H1 (cell line): ENCODE measurements at regions of chr9 and their contacts with region 1.

Region 1: GRCh38 chr9:84397151-84397728 is 56.7 kb upstream of the SLC28A3 start:
- DNase-seq: peak; percentile 31 to 81
- H3K4me3 ChIP-seq: no peak overlapping the region
- H3K27ac ChIP-seq: no peak overlapping the region
- H3K4me1 ChIP-seq: no peaks in the 10 kb centered on the region
- H3K27me3 ChIP-seq: no peaks in the 10 kb centered on the region
- CTCF ChIP-seq: peak; percentile 74 to 84 (median 77)
- EP300 ChIP-seq: no peak
- POLR2A ChIP-seq: no peak
- RAD21 ChIP-seq: peak; percentile 92 to 95

Region 2: DNA sequence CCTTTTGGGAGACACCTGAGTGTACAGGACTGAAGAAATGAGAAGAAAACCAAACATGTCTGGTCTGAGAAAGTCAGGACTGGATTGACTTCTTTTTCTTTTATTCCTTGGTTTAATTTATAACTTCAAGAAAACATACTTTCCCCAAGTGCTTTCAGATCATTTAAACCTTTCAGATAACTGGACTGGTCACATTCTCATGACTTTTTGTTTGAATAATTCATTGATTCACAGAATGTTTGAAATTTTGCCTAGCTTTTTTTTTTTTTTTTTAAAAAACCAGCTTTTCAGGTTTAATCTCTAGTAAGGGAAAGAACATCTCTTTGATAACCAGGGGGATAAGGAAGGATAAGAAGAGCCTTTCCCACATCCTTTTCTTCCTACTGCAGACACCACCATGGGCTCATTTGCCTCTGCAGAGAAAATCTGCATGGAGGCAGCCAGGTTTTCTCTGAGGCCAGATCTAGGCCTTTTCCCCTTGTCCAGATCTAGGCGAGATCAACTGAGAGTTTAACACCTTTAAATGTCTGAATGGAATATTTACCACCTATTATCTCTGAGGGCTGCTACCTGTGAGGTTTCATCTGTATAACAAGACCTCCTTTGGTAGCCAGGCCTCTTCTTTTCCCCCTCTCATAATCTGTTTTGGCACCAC is 11.7 kb before region 1 on chr9:
- CTCF ChIA-PET with region 1: interaction called, 11 read pairs
- POLR2A ChIA-PET with region 1: no interaction called
- DNase-seq: no peak
- H3K4me3 ChIP-seq: no peak overlapping the region
- H3K27ac ChIP-seq: no peak overlapping the region
- H3K4me1 ChIP-seq: no peaks in the 10 kb centered on the region; a peak in 1 of 7 replicates
- H3K27me3 ChIP-seq: no peaks in the 10 kb centered on the region
- CTCF ChIP-seq: no peak
- EP300 ChIP-seq: no peak
- POLR2A ChIP-seq: no peak
- RAD21 ChIP-seq: no peak

Region 3: GRCh38 chr9:84411683-84412267 is 14.5 kb after region 1 on chr9:
- CTCF ChIA-PET with region 1: interaction called, 21 read pairs
- POLR2A ChIA-PET with region 1: no interaction called
- DNase-seq: no peak
- H3K4me3 ChIP-seq: no peak overlapping the region
- H3K27ac ChIP-seq: no peak overlapping the region
- H3K4me1 ChIP-seq: no peaks in the 10 kb centered on the region
- H3K27me3 ChIP-seq: no peaks in the 10 kb centered on the region
- CTCF ChIP-seq: no peak
- EP300 ChIP-seq: no peak
- POLR2A ChIP-seq: no peak
- RAD21 ChIP-seq: no peak

Region 4: DNA sequence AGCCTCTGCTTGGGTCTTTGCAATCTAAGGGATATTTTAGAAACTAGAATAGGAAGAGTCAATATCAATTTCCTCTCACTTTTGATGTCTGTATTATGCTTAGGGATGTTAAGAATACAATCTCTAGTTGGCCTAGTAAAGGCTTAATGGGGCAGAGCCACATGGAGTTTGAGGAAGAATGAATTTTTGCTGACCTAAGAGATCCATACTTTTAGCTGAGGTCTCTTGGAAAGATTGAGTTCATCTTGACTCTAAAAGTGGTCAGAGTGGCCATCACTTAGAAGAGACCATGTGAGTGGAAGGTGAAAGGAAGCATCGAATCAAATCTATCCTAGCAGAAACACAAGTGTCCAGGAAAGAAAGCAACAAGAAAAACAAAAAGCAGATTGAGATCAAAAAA is 35.5 kb after region 1 on chr9:
- CTCF ChIA-PET with region 1: no interaction called
- POLR2A ChIA-PET with region 1: no interaction called
- DNase-seq: no peak
- H3K4me3 ChIP-seq: no peak overlapping the region
- H3K27ac ChIP-seq: no peak overlapping the region
- H3K4me1 ChIP-seq: no peaks in the 10 kb centered on the region
- H3K27me3 ChIP-seq: no peaks in the 10 kb centered on the region
- CTCF ChIP-seq: no peak
- EP300 ChIP-seq: no peak
- POLR2A ChIP-seq: no peak
- RAD21 ChIP-seq: no peak